H1 (cell line): ENCODE measurements at regions of chr2 and their contacts with region 1.

Region 1: DNA sequence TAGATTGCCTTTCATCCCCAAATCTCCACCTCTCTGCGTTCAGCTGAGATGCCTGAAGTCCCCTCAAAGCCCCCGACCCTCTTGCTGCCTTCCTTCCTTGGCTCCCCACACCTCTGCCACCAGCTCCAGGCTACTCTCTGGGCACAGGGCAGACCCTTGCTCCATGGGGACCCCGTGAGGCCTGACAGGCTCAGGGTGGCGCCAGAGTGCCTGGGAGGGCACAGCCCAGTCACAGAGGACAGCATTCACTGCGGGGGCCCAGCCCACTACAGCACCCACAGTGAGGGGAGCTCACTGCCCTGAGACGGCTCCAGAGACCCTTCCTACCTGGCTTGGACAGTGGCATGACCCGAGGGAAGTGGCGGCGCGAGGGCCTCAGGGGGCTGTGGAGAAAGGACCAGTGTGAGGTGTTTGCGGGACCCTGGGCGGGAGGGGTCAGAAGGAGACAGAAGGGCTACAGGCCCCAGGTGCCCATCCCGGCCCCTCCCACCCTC is 51.0 kb downstream of the AQP12A start:
- DNase-seq: peak in 1 of 2 experiments; percentile 54
- H3K4me3 ChIP-seq: no peak overlapping the region
- H3K27ac ChIP-seq: no peak overlapping the region
- H3K4me1 ChIP-seq: no peaks in the 10 kb centered on the region
- H3K27me3 ChIP-seq: no peaks in the 10 kb centered on the region
- CTCF ChIP-seq: peak in 2 of 3 experiments; percentile 20 to 39; a peak in 2 of 4 replicates
- EP300 ChIP-seq: no peak
- POLR2A ChIP-seq: no peak
- RAD21 ChIP-seq: 0 out of 4 replicates have a peak, but pooled peaks of 1 of the 2 experiments have one; percentile 16

Region 2: DNA sequence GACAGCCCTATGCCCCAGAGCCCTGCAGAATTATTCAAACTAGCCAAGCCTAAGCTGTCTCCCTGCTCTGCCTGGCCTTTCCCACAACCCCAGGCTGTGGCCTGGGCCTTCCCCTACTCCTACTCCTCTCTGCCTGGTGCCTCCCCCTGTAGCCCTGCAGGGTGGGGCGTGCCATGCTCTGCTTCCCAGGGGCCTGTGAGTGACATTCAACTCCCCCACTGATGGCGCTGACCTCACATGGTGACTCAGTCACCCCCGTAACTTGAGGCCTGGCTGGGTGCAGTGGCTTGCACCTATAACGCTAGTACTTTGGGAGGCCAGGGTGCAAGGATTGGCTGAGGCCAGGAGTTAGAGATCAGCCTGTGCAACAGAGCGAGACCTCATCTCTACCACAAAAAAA is 16.8 kb after region 1 on chr2:
- CTCF ChIA-PET with region 1: interaction called, 6 read pairs
- POLR2A ChIA-PET with region 1: interaction called, 21 read pairs
- DNase-seq: no peak
- H3K4me3 ChIP-seq: no peak overlapping the region
- H3K27ac ChIP-seq: no peak overlapping the region
- H3K4me1 ChIP-seq: no peaks in the 10 kb centered on the region; a peak in 1 of 7 replicates
- H3K27me3 ChIP-seq: no peaks in the 10 kb centered on the region
- CTCF ChIP-seq: no peak
- EP300 ChIP-seq: no peak
- POLR2A ChIP-seq: no peak
- RAD21 ChIP-seq: no peak

Region 3: GRCh38 chr2:240765007-240765406 is 22.4 kb after region 1 on chr2:
- CTCF ChIA-PET with region 1: interaction called, 3 read pairs
- POLR2A ChIA-PET with region 1: interaction called, 21 read pairs
- DNase-seq: no peak
- H3K4me3 ChIP-seq: no peak overlapping the region
- H3K27ac ChIP-seq: no peak overlapping the region
- H3K4me1 ChIP-seq: no peaks in the 10 kb centered on the region
- H3K27me3 ChIP-seq: no peaks in the 10 kb centered on the region
- CTCF ChIP-seq: no peak
- EP300 ChIP-seq: no peak
- POLR2A ChIP-seq: no peak
- RAD21 ChIP-seq: no peak

Region 4: GRCh38 chr2:240972636-240973521 is 230.2 kb after region 1 on chr2:
- CTCF ChIA-PET with region 1: no interaction called
- POLR2A ChIA-PET with region 1: no interaction called
- DNase-seq: no peak
- H3K4me3 ChIP-seq: no peak overlapping the region
- H3K27ac ChIP-seq: no peak overlapping the region
- H3K4me1 ChIP-seq: no peaks in the 10 kb centered on the region
- H3K27me3 ChIP-seq: no peaks in the 10 kb centered on the region
- CTCF ChIP-seq: no peak
- EP300 ChIP-seq: no peak
- POLR2A ChIP-seq: no peak
- RAD21 ChIP-seq: no peak